ENCODE measurements at regions of chr9 and their contacts with region 1.

Region 1: DNA sequence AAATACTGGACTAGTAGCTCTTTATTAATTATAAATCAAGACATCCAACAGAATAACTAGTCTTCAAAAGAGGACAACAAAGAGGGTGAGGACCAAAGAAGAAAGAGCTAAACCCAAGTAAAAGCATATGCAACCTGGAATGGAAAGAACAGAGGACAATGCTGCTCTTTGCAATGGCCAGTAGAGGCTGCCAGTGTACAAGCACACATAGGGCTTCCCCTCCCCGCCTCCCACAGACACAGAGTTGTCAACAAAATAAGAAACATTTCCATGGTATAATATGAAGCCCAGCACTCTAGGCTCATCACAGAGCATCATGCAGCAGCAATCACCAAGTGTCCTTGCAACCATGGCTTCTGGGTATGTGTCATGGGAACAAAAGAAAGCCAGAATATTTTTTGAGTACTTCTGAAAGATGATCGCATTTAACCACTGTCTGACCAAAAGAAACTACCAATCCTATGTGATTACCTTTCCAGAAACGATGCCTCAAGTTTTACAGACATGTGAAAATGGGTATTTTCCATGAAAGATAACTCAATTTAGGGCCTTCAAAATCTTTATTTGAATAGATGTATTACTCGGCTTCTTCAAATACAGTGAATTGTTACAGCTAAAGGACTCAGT is 58.1 kb downstream of the RFX3 start:
- DNase-seq: peak; percentile 50
- H3K4me3 ChIP-seq: peak overlapping the region in 1 of 2 experiments; percentile 7; a peak in 1 of 4 replicates
- H3K27ac ChIP-seq: no peak overlapping the region; a peak in 1 of 4 replicates
- H3K4me1 ChIP-seq: peaks cover 4 to 10% of the 10 kb centered on the region in 2 experiments; a peak in 2 of 4 replicates
- H3K27me3 ChIP-seq: no peaks in the 10 kb centered on the region
- CTCF ChIP-seq: peak; percentile 87
- EP300 ChIP-seq: 0 out of 4 replicates have a peak, but pooled peaks of 1 of the 2 experiments have one; percentile 9
- RAD21 ChIP-seq: peak; percentile 97

Region 2: DNA sequence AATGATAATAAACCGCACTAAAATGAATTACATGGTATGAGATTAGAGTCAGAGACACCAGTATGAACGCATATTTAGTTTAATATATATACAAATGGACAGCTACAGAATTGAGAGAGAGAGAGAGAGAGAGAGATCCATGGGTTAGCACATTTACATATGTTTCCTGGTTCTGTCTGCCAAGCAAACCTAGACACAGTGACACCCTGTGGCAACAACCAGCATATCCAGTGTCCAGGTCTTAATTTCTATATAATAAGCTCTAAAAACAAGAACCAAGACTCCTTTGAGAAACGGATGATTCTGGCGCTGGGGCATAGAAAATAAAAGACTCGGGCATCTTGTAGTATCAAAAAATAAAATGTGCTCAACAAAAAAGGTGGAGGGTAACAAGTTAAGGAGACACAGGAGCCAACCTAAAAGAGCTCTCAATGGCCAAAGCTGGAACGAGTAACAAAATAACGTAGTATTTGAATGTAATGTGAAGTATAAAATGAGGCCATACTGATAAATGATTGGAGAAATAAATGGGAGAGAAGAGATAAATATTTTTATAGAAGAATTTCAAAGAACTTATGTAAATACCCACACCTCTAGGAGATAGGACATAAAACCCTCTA is 26.4 kb before region 1 on chr9:
- CTCF ChIA-PET with region 1: interaction called, 10 read pairs
- POLR2A ChIA-PET with region 1: no interaction called
- DNase-seq: peak; percentile 28
- H3K4me3 ChIP-seq: no peak overlapping the region; a peak in 1 of 4 replicates
- H3K27ac ChIP-seq: no peak overlapping the region
- H3K4me1 ChIP-seq: peaks cover 0 to 2% of the 10 kb centered on the region in 2 experiments; a peak in 2 of 4 replicates
- H3K27me3 ChIP-seq: no peaks in the 10 kb centered on the region
- CTCF ChIP-seq: peak; percentile 73
- EP300 ChIP-seq: no peak
- RAD21 ChIP-seq: peak; percentile 68

Region 3: GRCh38 chr9:3455717-3456116 is 12.0 kb before region 1 on chr9:
- CTCF ChIA-PET with region 1: interaction called, 12 read pairs
- POLR2A ChIA-PET with region 1: no interaction called
- DNase-seq: no peak
- H3K4me3 ChIP-seq: no peak overlapping the region
- H3K27ac ChIP-seq: no peak overlapping the region
- H3K4me1 ChIP-seq: peaks cover 0 to 10% of the 10 kb centered on the region in 2 experiments
- H3K27me3 ChIP-seq: no peaks in the 10 kb centered on the region
- CTCF ChIP-seq: no peak
- EP300 ChIP-seq: no peak
- RAD21 ChIP-seq: no peak

Region 4: DNA sequence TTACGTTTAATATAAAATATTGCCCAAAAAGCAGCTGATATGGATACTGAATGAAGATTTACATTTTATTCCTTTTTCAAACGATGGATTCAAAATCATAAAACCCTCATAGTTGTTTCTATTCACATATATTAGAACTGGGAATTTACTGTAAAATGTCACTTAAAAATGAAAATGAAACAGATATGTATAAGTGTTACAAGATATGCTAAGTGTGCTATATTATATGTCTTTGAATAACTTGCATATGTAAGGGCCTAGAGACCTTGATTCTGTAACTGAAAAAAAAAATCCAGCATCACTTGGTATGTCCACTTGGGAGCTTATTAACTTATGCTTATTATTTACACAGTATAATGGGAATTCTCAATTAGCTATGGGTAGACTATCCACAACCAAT is 14.9 kb after region 1 on chr9:
- CTCF ChIA-PET with region 1: interaction called, 11 read pairs
- POLR2A ChIA-PET with region 1: no interaction called
- DNase-seq: no peak
- H3K4me3 ChIP-seq: no peak overlapping the region
- H3K27ac ChIP-seq: no peak overlapping the region
- H3K4me1 ChIP-seq: no peaks in the 10 kb centered on the region
- H3K27me3 ChIP-seq: no peaks in the 10 kb centered on the region
- CTCF ChIP-seq: no peak
- EP300 ChIP-seq: no peak
- RAD21 ChIP-seq: no peak

Measured in SK-N-SH (cell line).